SK-N-SH (cell line): ENCODE measurements at regions of chr2 and their contacts with region 1.

Region 1: GRCh38 chr2:64873472-64873924 is 115.7 kb upstream of the SLC1A4 start:
- DNase-seq: peak; percentile 87
- H3K4me3 ChIP-seq: peak overlapping the region in 1 of 2 experiments; percentile 40; a peak in 1 of 4 replicates
- H3K27ac ChIP-seq: no peak overlapping the region
- H3K4me1 ChIP-seq: peaks cover 2 to 6% of the 10 kb centered on the region in 2 experiments; a peak in 2 of 4 replicates
- H3K27me3 ChIP-seq: no peaks in the 10 kb centered on the region
- CTCF ChIP-seq: peak; percentile 95
- EP300 ChIP-seq: no peak
- RAD21 ChIP-seq: peak; percentile 85

Region 2: DNA sequence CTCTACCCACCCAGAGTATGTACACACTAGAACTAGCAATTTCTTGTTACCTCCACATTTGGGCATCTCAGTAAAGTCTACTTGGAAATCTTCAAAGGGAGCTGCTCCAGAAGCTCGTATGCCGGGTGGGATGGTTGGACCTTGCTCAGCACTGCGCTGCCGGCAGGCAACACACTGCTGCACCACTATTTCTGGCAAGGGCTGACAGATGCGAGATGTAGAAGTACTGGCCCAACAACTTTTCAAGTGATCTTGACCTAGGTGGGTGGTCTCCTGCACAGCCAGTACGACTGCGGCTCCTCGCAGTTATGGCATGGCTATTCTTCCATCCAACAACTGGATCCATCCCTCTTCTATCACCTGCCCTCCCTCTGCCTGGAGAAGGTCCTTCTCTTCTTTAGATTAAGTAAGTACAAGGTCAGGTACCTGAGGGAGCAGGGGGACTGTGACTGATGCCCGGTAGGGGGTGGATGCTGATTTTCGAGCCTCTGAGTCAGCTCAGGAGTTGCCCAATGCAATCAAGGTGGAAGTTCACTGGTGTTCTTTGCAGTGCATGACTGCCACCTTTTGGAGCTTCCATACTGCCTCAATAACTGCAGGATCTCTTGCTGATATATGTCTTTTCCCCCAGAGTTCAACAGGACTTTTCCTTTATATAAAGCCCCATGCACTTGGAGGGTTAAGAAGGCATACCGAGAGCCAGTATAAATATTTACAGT is 15.3 kb after region 1 on chr2:
- CTCF ChIA-PET with region 1: interaction called, 15 read pairs
- POLR2A ChIA-PET with region 1: no interaction called
- DNase-seq: no peak
- H3K4me3 ChIP-seq: no peak overlapping the region
- H3K27ac ChIP-seq: no peak overlapping the region
- H3K4me1 ChIP-seq: no peaks in the 10 kb centered on the region
- H3K27me3 ChIP-seq: peaks cover 14% of the 10 kb centered on the region; the same call in 1 of the 2 replicates
- CTCF ChIP-seq: peak; percentile 19; the same call in 1 of the 2 replicates
- EP300 ChIP-seq: no peak
- RAD21 ChIP-seq: peak; percentile 6; the same call in 1 of the 2 replicates